ENCODE measurements at regions of chr16 and their contacts with region 1.

Region 1: GRCh38 chr16:77171745-77172635 is 19.0 kb upstream of the MON1B start:
- DNase-seq: peak in 2 of 5 donors; percentile 23 to 27
- H3K4me3 ChIP-seq: no peak overlapping the region
- H3K4me3 Mint-ChIP-seq: no peak overlapping the region
- H3K27ac ChIP-seq: no peak overlapping the region
- H3K27ac Mint-ChIP-seq: peak overlapping the region in 1 of 8 donors; percentile 10
- H3K4me1 ChIP-seq: no peaks in the 10 kb centered on the region
- H3K4me1 Mint-ChIP-seq: no peaks in the 10 kb centered on the region
- H3K27me3 ChIP-seq: peaks cover 10% of the 10 kb centered on the region
- H3K27me3 Mint-ChIP-seq: peaks cover 12 to 56% of the 10 kb centered on the region in 2 donors

Region 2: GRCh38 chr16:77157346-77158058 is 14.5 kb before region 1 on chr16:
- CTCF ChIA-PET with region 1: interaction called, 10 read pairs
- POLR2A ChIA-PET with region 1: no interaction called
- DNase-seq: no peak
- H3K4me3 ChIP-seq: no peak overlapping the region
- H3K4me3 Mint-ChIP-seq: no peak overlapping the region
- H3K27ac ChIP-seq: no peak overlapping the region
- H3K27ac Mint-ChIP-seq: no peak overlapping the region
- H3K4me1 ChIP-seq: no peaks in the 10 kb centered on the region
- H3K4me1 Mint-ChIP-seq: no peaks in the 10 kb centered on the region
- H3K27me3 ChIP-seq: no peaks in the 10 kb centered on the region
- H3K27me3 Mint-ChIP-seq: peaks cover 13 to 47% of the 10 kb centered on the region in 2 donors